Endothelial cell of umbilical vein (primary cell): ENCODE measurements at regions of chr6 and their contacts with region 1.

Region 1: DNA sequence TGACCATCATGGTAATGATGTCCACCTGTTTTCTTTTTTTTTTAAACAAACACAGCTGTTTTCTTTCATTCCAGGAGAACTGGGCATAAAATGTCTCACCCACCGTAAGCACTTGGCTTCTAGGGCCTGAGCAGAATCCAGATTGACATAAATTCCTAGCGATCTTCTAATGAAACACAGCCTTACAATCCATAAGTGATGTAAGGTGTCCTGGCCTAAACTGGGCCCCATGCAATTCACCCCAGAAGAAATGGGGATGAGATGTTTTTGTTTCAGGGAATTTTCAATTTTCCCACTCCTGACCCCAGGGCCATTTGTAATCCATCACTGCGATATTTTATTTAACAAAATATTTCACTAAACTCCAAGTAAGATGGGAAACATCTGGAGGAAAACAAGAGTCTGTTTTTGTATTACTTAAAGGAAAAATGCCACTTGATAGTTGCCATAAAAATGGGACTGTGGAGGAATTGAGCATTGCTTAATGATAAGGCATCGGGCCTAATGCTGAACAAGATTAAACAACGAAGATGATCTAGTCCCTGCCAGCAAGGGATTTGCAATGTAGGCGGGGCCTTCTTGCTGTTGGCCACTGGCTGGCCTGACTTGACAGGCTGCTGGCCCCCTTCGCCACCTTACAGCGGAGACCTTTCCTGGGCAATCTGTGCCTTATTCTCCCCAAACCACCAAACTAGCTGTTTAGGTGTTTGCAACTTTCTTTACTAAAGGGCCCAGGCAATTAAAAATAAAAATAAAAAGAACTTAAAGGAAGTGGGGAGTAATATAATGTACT is 183.7 kb downstream of the CD109 start:
- DNase-seq: no peak
- H3K4me3 ChIP-seq: no peak overlapping the region
- H3K27ac ChIP-seq: no peak overlapping the region
- H3K4me1 ChIP-seq: no peaks in the 10 kb centered on the region
- H3K27me3 ChIP-seq: no peaks in the 10 kb centered on the region
- CTCF ChIP-seq: no peak
- POLR2A ChIP-seq: no peak

Region 2: GRCh38 chr6:73782911-73783310 is 96.8 kb before region 1 on chr6:
- CTCF ChIA-PET with region 1: no interaction called
- POLR2A ChIA-PET with region 1: no interaction called
- dilution Hi-C with region 1: no loop called
- intact Hi-C with region 1: no loop called
- DNase-seq: no peak
- H3K4me3 ChIP-seq: no peak overlapping the region
- H3K27ac ChIP-seq: no peak overlapping the region
- H3K4me1 ChIP-seq: no peaks in the 10 kb centered on the region
- H3K27me3 ChIP-seq: no peaks in the 10 kb centered on the region
- CTCF ChIP-seq: no peak
- POLR2A ChIP-seq: no peak

Region 3: DNA sequence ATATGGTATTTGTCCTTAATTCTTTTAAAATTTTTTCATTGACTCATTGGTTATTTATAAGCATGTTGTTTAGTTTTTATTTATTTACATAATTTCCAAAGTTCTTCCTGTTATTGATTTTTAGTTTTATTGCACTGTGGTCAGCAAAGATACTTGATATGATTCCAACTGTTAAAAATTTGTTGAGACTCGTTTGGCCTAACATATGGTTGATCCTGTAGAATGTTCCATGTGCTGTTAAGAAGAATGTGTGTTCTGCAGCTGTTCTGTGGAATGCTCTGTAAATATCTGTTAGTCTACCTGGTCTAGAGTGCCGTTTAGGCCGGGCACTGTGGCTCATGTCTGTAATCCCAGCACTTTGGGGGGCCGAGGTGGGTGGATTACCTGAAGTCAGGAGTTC is 14.0 kb after region 1 on chr6:
- CTCF ChIA-PET with region 1: no interaction called
- POLR2A ChIA-PET with region 1: no interaction called
- dilution Hi-C with region 1: no loop called
- intact Hi-C with region 1: loop called (anchors 1 kb)
- DNase-seq: no peak
- H3K4me3 ChIP-seq: no peak overlapping the region
- H3K27ac ChIP-seq: no peak overlapping the region
- H3K4me1 ChIP-seq: no peaks in the 10 kb centered on the region
- H3K27me3 ChIP-seq: peaks cover 2 to 4% of the 10 kb centered on the region in 2 experiments
- CTCF ChIP-seq: no peak
- POLR2A ChIP-seq: no peak